Head of caudate nucleus (tissue), 42 donors: ENCODE measurements at regions of chrX and their contacts with region 1.

Region 1: DNA sequence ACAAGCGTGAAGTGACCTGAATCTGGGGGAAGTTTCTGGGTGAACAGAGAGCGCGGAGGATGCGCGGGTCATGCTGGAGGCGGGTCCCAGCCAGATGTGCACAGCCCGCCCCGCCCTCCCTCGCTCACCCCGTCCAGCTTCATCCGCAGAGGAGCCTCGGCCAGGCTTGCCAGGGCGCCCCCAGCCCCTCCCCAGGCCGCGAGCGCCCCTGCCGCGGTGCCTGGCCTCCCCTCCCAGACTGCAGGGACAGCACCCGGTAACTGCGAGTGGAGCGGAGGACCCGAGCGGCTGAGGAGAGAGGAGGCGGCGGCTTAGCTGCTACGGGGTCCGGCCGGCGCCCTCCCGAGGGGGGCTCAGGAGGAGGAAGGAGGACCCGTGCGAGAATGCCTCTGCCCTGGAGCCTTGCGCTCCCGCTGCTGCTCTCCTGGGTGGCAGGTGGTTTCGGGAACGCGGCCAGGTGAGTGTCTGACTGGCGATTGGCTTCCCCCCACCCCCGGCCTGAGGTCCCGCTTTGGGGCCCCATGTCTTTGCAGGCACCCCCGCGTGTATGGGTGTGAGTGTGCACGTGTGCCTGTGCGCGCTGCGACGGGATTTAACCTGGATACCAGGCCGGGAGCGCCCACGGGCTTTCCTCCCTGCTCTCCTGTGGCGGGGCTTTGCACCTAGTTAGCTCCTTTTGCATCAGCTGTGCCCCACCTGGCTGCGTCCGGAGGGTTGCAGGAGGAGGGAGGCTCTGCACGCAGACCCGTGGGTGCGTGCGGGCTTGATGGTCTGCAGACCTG is at the start of gene EGFL6:
- DNase-seq: peak in 12 of 42 donors; percentile 2 to 29 (median 8)

Region 2: GRCh38 chrX:13711141-13711540 is 141.5 kb after region 1 on chrX:
- intact Hi-C with region 1: no loop called
- DNase-seq: no peak

Region 3: DNA sequence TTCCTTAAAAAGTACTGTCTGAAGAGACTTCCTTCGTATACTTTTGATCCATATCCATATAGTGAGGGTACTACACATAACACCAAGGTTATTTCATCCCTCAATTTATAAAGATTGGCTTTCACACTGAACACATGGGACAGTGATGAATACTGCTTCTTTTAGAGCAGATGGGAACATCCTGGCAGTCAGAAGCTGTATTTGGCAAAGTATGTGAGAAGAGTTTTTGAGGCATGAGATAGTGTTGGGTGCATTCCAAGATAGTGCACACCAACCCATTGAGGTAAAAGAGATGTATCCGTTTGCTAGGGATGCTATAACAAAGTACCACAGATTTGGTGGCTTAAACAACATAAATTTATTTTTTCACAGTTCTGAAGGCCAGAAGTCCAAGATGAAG is 1444.6 kb after region 1 on chrX:
- intact Hi-C with region 1: loop called (anchors 10 kb)
- DNase-seq: no peak